T-cell (primary cell): ENCODE measurements at regions of chr13 and their contacts with region 1.

Region 1: DNA sequence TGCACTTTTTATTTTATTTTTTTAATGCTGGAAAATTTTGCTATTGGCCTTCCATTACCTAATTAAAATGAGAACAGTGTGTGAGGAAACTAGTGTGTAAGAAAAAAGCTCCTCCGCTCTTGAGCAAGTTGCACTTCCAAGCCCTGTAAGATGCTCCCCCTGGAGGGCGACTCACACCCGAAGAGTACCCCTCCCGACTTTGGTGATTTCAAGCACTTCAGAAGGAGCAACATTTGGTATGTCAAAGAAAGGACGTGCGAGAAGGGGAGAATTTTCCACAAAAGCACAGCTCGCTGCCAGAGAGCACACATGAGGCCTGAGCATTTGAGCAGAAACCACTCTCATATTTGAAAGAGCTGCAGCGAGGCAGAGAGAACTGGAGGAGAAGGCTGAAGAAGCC is 504.4 kb downstream of the FGF9 start:
- DNase-seq: no peak
- ATAC-seq: no peak
- H3K4me3 ChIP-seq: no peak overlapping the region
- H3K4me3 Mint-ChIP-seq: no peak overlapping the region
- H3K27ac ChIP-seq: no peak overlapping the region
- H3K27ac Mint-ChIP-seq: no peak overlapping the region
- H3K4me1 ChIP-seq: no peaks in the 10 kb centered on the region
- H3K4me1 Mint-ChIP-seq: peaks cover 7 to 14% (median 8%) of the 10 kb centered on the region in 3 donors
- H3K27me3 ChIP-seq: no peaks in the 10 kb centered on the region
- H3K27me3 Mint-ChIP-seq: no peaks in the 10 kb centered on the region

Region 2: GRCh38 chr13:22073718-22074117 is 101.5 kb before region 1 on chr13:
- CTCF ChIA-PET with region 1: no interaction called
- POLR2A ChIA-PET with region 1: interaction called in 1 of 2 experiments, 12 read pairs
- DNase-seq: no peak
- ATAC-seq: no peak
- H3K4me3 ChIP-seq: no peak overlapping the region
- H3K4me3 Mint-ChIP-seq: no peak overlapping the region
- H3K27ac ChIP-seq: no peak overlapping the region
- H3K27ac Mint-ChIP-seq: peak overlapping the region in 1 of 2 donors; percentile 34
- H3K4me1 ChIP-seq: peaks cover 0 to 2% of the 10 kb centered on the region in 2 experiments
- H3K4me1 Mint-ChIP-seq: peaks cover 36 to 45% (median 38%) of the 10 kb centered on the region in 3 donors
- H3K27me3 ChIP-seq: no peaks in the 10 kb centered on the region
- H3K27me3 Mint-ChIP-seq: no peaks in the 10 kb centered on the region